HepG2 (cell line): ENCODE measurements at regions of chr1 and their contacts with region 1.

Region 1: DNA sequence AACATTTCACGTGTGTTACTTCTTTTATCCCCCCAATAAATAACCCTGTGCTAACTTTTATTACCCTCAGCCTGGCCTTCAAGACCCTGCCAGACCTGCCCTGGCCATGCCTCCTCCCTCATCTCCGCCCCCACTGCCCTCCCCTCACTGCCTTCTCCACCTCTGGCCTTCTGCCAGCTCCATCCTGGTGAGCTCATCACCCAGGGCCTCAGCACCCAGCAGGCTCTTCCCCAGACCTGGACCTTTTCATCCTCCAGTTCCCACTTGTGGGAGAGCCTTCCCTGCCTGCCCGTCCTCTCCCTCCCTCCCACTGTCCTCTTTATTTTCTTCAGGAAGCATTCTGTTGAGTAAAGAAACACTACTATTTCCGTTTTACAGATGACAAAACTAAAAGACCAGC is 72.0 kb downstream of the SLC66A1 start:
- DNase-seq: no peak
- ATAC-seq: no peak
- H3K4me3 ChIP-seq: no peak overlapping the region
- H3K27ac ChIP-seq: no peak overlapping the region
- H3K4me1 ChIP-seq: peaks cover 52% of the 10 kb centered on the region
- H3K27me3 ChIP-seq: no peaks in the 10 kb centered on the region
- CTCF ChIP-seq: no peak
- EP300 ChIP-seq: no peak
- POLR2A ChIP-seq: no peak
- RAD21 ChIP-seq: no peak

Region 2: DNA sequence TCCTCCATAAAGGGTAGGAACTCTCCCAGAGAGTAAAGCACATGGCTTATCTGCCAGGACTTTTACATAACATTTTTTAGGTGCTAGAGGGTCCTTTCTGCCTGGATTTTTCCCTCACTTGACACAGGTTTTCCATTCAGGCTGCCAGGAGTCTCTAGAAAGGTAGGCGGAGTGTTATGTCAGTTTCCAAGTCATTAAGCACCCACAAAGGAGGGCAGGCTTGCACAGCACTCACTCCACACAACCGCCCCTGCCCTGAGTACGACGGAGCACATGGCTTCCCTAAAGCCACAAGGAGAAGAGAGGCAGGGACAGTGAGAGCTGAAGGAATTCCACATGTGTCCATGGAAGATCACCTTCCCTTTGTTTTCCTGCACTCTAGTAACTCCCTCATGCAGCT is 45.5 kb after region 1 on chr1:
- CTCF ChIA-PET with region 1: no interaction called
- POLR2A ChIA-PET with region 1: interaction called, 4 read pairs
- in situ Hi-C with region 1: no loop called
- intact Hi-C with region 1: loop called (anchors 2 kb)
- DNase-seq: no peak
- ATAC-seq: no peak
- H3K4me3 ChIP-seq: no peak overlapping the region
- H3K27ac ChIP-seq: peak overlapping the region; percentile 65
- H3K4me1 ChIP-seq: peaks cover 89% of the 10 kb centered on the region
- H3K27me3 ChIP-seq: no peaks in the 10 kb centered on the region
- CTCF ChIP-seq: no peak
- EP300 ChIP-seq: no peak
- POLR2A ChIP-seq: no peak
- RAD21 ChIP-seq: no peak

Region 3: DNA sequence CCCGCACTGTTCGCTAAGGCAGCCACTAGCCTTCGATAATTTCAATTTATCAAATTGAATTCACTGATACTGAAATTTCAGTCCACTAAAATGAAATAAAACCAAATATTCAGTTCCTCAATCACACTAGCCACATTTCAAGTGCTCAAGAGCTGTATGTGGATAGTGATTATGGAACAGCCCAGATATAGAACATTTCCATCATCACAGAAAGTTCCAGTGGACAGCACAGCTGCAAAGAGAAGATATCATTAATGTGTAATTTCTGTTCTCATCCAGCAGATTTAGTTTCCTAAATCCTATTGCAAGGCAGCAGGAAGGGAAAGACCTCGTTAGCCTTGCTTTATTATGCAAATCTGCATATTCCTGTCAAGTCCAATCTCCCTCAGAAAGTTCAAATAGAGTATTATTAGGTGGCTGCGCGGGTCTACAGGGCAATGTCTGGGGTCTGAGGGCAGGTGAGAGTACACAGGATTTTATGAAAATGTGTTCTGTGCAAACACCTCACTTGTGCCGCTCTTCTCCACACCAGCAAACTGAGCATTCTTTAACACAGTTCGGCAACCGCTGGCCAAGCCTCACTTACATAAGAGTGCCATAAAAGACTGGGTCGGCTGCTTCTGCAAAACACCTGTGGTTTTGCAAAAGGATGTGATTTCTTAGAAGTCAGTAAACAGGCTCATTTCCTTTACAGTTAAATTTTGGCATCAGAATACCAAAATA is 78.8 kb after region 1 on chr1:
- CTCF ChIA-PET with region 1: no interaction called
- POLR2A ChIA-PET with region 1: no interaction called
- in situ Hi-C with region 1: no loop called
- intact Hi-C with region 1: no loop called
- DNase-seq: no peak
- ATAC-seq: no peak
- H3K4me3 ChIP-seq: no peak overlapping the region
- H3K27ac ChIP-seq: no peak overlapping the region
- H3K4me1 ChIP-seq: peaks cover 22% of the 10 kb centered on the region
- H3K27me3 ChIP-seq: no peaks in the 10 kb centered on the region
- CTCF ChIP-seq: no peak
- EP300 ChIP-seq: no peak
- POLR2A ChIP-seq: no peak
- RAD21 ChIP-seq: no peak